ENCODE measurements at regions of chr7 and their contacts with region 1.

Region 1: DNA sequence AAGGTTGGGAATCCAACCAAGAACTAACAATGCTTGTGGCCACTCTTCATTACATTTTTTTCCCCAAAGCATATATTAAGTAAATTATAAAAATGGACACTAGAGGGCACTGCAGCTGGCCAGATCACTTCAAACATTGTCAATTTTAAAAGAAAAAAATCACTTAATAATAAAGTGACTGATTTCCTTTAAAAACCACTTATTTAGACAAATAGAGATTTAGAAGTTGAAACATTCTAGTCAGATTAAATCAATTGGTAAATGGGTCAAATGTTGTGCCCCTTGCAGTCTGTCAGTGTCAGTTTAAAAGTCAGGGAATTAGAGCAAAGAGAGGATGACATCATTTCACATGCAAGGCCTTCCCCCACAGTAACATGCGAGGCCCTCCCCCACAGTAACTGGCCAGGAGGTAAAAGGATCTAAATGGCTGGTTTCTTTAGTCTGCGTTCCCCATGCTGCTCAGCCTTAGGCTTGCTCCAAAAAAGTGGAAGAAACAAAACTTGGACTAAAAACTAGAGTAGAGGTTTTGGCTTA is 177.9 kb downstream of the SKAP2 start:
- DNase-seq: no peak
- CTCF ChIP-seq: peak; percentile 58

Region 2: DNA sequence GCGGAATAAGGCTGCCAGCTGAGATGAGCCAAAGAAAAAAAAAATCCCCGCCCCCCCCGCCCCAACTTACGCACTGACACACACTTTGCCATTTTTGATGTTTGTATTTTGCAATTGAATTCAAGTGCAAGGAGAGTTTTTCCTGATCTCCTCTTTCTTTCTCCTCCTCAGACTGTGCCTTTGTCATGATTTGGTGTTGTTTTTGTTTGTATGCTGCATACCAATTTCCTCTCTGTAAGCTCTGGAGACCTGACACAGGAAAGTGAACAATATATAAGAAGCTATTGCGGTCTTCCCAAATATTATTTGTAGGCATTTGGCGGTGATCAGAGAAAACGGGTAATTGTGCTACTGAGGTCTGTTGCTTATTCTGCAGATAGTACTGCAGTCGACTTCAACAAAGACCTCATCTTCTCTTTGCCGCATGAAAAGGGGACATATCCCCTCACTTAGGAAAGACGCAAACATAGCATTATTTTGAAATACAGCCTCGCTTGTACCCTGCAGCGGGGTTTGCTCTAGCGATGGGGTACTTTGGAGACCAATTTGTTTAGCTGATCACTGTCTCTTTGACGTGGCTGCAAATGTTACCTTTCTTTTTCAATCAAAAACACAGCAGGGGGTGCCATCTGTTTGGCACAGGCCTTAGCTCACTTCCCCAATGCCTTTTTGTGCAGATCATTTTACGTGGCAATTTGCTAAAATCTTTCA is 28.7 kb before region 1 on chr7:
- CTCF ChIA-PET with region 1: interaction called, 10 read pairs
- POLR2A ChIA-PET with region 1: no interaction called
- DNase-seq: no peak
- CTCF ChIP-seq: no peak

Region 3: DNA sequence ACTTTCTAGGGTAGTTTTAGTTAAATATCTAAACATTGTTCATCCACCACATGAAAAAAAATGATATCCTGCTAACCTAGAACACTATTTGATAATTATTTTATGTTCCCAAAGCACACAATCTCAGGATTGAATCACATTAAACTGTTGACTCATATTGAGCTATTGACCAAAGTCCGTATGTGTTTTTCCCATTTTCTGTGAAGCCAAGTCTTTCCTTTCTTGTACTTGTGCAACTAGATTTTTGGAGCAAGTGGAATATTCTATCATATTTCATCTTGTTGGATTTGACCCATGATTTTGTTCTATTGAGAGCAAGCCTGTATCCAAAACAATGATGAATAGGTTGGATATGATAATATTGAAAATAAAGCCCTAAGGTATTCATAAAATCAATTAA is 13.3 kb after region 1 on chr7:
- CTCF ChIA-PET with region 1: interaction called, 83 read pairs
- POLR2A ChIA-PET with region 1: no interaction called
- DNase-seq: no peak
- CTCF ChIP-seq: no peak

Region 4: GRCh38 chr7:26718063-26718462 is 31.5 kb after region 1 on chr7:
- CTCF ChIA-PET with region 1: interaction called, 18 read pairs
- POLR2A ChIA-PET with region 1: no interaction called
- DNase-seq: no peak
- CTCF ChIP-seq: no peak

Region 5: GRCh38 chr7:26792576-26792975 is 106.1 kb after region 1 on chr7:
- CTCF ChIA-PET with region 1: no interaction called
- POLR2A ChIA-PET with region 1: no interaction called
- DNase-seq: no peak
- CTCF ChIP-seq: no peak

Region 6: DNA sequence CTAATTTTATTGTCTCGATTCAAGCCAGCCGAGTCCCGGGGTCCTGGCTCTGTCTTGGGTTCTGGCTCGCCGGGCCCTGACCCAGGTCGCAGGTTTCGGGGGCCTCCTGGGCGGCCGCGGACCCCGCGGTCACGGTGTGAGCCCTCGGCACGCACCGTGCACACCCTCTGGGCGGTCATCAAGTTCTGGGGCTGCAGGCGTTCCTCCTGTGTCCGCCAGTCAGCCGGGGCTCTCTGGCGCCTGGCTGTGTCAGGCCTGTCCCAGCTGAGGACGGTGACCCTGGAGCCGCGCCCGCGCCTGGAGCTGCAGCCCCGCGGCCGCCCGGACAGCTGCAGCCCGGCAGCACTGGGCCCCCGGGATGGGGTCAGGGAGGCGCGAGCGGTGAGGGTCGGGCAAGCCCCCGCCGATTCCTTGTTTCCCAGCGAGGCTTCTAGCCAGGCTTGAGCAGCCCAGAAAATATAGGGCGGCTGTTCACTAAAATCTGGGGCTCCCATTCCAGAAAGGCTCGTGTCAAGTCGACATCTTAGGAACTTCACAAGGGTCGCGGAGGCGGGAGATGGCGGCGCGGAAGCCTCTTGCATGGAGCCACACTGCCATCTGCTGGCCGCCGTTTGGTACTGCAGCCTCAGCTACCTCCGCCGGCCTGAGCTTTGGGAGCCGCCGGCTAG is 474.2 kb after region 1 on chr7:
- CTCF ChIA-PET with region 1: interaction called, 29 read pairs
- POLR2A ChIA-PET with region 1: no interaction called
- DNase-seq: peak; percentile 87
- CTCF ChIP-seq: peak; percentile 97

Region 7: DNA sequence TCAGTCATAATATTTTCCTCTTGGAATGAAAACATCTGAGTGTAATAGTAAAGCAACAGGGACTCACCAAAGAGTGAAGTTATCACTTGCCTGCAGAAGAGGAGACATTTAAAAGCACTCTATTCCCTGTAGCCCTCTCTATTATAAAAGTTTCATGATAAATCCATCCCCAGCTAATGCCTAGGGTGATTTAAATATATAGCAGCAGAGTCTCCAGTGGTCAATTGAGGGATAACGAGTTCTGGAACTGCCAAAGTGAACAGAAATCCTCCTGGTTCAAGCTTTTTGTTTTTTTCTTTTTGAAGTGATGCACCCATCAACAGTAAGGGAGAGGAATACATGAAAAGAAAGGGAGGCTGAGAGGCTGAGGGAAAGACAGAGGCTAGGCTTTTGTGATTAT is 643.4 kb after region 1 on chr7:
- CTCF ChIA-PET with region 1: no interaction called
- POLR2A ChIA-PET with region 1: no interaction called
- DNase-seq: no peak
- CTCF ChIP-seq: no peak